Mucosa of descending colon (tissue), 3 donors: ENCODE measurements at regions of chr3 and their contacts with region 1.

Region 1: GRCh38 chr3:142279965-142280590 is 54.7 kb upstream of the GK5 start:
- DNase-seq: peak in 1 of 3 donors; percentile 68
- ATAC-seq: peak; percentile 97
- H3K4me3 ChIP-seq: no peak overlapping the region
- H3K4me1 ChIP-seq: no peaks in the 10 kb centered on the region
- CTCF ChIP-seq: peak; percentile 18

Region 2: GRCh38 chr3:142117056-142117851 is 162.8 kb before region 1 on chr3:
- intact Hi-C with region 1: loop called in 1 of 2 experiments (anchors 10 kb)
- DNase-seq: peak in 2 of 3 donors; percentile 20 to 36
- ATAC-seq: peak; percentile 88
- H3K4me3 ChIP-seq: no peak overlapping the region
- H3K4me1 ChIP-seq: peaks cover 10% of the 10 kb centered on the region
- CTCF ChIP-seq: no peak

Region 3: DNA sequence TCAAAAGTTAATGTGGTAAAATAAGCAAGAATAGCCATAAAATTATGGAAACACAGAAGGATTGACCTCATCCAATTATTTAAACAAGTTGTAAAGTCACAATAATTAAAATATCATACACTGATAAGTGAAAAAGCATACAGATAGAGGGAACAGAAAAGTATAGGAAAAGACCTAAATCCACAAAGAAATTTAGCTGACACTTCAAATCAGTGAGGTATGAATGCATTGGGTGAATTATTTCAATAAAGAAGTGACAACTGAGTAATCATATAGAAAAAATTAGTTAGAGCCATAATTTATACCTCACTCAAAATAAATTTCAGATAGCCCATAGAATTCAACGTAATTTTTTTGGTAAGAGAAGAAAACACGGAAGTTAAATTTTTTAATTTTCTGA is 155.8 kb before region 1 on chr3:
- intact Hi-C with region 1: loop called (anchors 2 to 10 kb)
- DNase-seq: no peak
- ATAC-seq: no peak
- H3K4me3 ChIP-seq: no peak overlapping the region
- H3K4me1 ChIP-seq: no peaks in the 10 kb centered on the region
- CTCF ChIP-seq: no peak